MCF 10A (cell line): ENCODE measurements at regions of chr11 and their contacts with region 1.

Region 1: GRCh38 chr11:47248664-47249377 is at the start of gene ACP2:
- DNase-seq: peak; percentile 85
- H3K4me3 Mint-ChIP-seq: peak within 1 kb of the TSS; percentile 91
- H3K27ac Mint-ChIP-seq: peak within 1 kb of the TSS; percentile 98
- H3K4me1 Mint-ChIP-seq: peaks cover 4% of the 10 kb centered on the region
- H3K27me3 Mint-ChIP-seq: no peaks in the 10 kb centered on the region
- CTCF ChIP-seq: peak; percentile 9
- total RNA-seq, gene ACP2: 18.7 and 23.7 TPM in 2 replicates

Region 2: GRCh38 chr11:47087801-47088200 is 161.0 kb before region 1 on chr11:
- CTCF ChIA-PET with region 1: no interaction called
- POLR2A ChIA-PET with region 1: no interaction called
- intact Hi-C with region 1: no loop called
- DNase-seq: no peak
- H3K4me3 Mint-ChIP-seq: no peak overlapping the region
- H3K27ac Mint-ChIP-seq: no peak overlapping the region
- H3K4me1 Mint-ChIP-seq: no peaks in the 10 kb centered on the region
- H3K27me3 Mint-ChIP-seq: no peaks in the 10 kb centered on the region
- CTCF ChIP-seq: no peak

Region 3: DNA sequence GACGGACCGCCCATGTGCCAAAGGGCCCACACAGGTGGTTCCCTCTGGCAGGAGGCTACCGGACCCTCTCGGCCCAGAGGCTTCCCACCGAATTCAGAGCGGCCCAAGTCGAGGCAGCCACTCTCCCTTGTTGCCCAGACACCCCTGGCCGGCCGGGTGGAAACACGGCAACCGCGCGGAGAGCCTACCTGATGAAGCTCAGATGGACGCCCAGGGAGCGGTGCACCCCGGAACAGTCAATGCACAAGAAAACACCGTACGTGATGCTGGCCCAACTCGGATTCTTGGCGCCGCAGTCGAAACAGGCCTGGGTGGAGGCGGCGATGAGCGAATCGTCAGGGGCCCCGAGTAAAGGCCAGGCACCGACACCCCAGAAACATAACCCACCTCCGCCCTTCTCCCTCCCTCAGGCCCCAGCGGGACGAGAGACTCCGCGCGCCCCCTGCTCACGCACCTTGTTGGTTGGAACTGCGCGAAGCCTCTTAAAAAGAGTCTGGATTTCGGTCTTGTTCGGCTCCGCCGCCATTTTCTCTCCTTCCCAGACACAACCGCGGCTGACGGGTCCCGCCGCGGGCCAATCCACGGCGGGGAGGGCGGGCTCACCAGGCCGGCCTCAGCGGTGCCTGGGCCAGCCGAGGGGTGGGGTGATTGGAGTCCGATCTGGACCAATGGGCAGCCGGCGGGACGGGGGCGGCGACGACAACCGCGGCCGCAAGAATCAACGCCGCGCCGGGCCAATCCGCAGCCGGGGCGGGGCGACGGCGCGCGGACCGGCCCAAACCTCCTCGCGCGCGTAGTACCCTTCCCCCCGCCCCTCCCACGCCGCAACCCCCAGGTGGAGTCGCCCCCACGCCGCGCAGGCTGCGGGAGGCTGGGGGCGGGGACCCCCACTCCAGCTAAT is 72.2 kb before region 1 on chr11 and contains the start of gene ARFGAP2:
- CTCF ChIA-PET with region 1: interaction called, 9 read pairs
- POLR2A ChIA-PET with region 1: interaction called, 5 read pairs
- intact Hi-C with region 1: loop called (anchors 2 kb)
- DNase-seq: peak; percentile 95
- H3K4me3 Mint-ChIP-seq: peak within 1 kb of the TSS; percentile 93
- H3K27ac Mint-ChIP-seq: peak within 1 kb of the TSS; percentile 99
- H3K4me1 Mint-ChIP-seq: peaks cover 17% of the 10 kb centered on the region
- H3K27me3 Mint-ChIP-seq: no peaks in the 10 kb centered on the region
- CTCF ChIP-seq: no peak
- total RNA-seq, gene ARFGAP2: 78.0 and 81.4 TPM in 2 replicates

Region 4: GRCh38 chr11:47233989-47234668 is 14.7 kb before region 1 on chr11:
- CTCF ChIA-PET with region 1: interaction called, 7 read pairs
- POLR2A ChIA-PET with region 1: interaction called, 30 read pairs
- intact Hi-C with region 1: no loop called
- DNase-seq: peak; percentile 57
- H3K4me3 Mint-ChIP-seq: no peak overlapping the region
- H3K27ac Mint-ChIP-seq: peak overlapping the region; percentile 72
- H3K4me1 Mint-ChIP-seq: peaks cover 14% of the 10 kb centered on the region
- H3K27me3 Mint-ChIP-seq: no peaks in the 10 kb centered on the region
- CTCF ChIP-seq: no peak

Region 5: GRCh38 chr11:47259178-47259977 is 10.6 kb after region 1 on chr11:
- CTCF ChIA-PET with region 1: interaction called, 33 read pairs
- POLR2A ChIA-PET with region 1: interaction called, 38 read pairs
- intact Hi-C with region 1: no loop called
- DNase-seq: peak; percentile 47
- H3K4me3 Mint-ChIP-seq: no peak overlapping the region
- H3K27ac Mint-ChIP-seq: no peak overlapping the region
- H3K4me1 Mint-ChIP-seq: peaks cover 24% of the 10 kb centered on the region
- H3K27me3 Mint-ChIP-seq: no peaks in the 10 kb centered on the region
- CTCF ChIP-seq: peak; percentile 40

Region 6: DNA sequence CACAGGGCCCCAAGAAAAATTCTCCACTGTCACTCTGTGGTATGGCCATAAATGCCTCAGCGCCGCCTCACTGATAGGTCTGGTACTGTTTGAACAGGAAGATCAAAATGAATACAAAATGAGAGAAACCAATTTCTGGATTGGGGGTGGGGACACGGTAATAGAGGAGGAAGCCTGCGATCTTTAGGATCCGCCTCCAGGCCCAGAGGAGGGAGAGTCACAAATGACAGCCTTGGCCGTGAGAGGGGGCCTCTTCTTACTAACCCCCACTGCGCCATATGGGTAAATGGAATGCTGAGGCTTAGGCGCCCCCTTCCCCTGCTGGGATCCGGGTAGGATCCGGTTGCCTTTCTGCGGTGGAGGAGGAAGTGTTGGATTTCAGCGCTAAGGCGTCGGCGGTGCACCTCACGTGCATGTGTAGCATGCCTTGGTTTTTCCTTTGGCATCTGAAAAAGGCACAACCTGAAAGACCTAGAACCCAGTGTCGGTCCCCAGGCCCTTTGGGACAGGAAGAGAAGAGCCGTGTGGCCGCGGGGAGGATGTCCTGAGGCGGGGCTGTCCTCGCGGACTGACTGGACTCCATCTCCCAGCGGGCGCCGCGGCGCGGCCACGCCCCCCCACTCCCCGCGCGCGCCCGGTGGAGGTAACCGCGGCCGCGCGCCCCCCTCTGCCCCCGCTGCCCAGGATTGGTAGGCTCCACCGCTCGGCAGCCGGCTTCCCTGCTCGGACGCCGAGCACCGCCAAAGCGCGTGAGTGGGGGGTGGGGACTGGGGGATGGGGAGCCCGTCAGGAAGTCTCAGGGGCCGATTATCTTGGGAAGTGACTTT is 20.4 kb after region 1 on chr11:
- CTCF ChIA-PET with region 1: interaction called, 9 read pairs
- POLR2A ChIA-PET with region 1: interaction called, 10 read pairs
- intact Hi-C with region 1: no loop called
- DNase-seq: peak; percentile 84
- H3K4me3 Mint-ChIP-seq: peak overlapping the region; percentile 85
- H3K27ac Mint-ChIP-seq: peak overlapping the region; percentile 78
- H3K4me1 Mint-ChIP-seq: peaks cover 16% of the 10 kb centered on the region
- H3K27me3 Mint-ChIP-seq: no peaks in the 10 kb centered on the region
- CTCF ChIP-seq: no peak

Region 7: DNA sequence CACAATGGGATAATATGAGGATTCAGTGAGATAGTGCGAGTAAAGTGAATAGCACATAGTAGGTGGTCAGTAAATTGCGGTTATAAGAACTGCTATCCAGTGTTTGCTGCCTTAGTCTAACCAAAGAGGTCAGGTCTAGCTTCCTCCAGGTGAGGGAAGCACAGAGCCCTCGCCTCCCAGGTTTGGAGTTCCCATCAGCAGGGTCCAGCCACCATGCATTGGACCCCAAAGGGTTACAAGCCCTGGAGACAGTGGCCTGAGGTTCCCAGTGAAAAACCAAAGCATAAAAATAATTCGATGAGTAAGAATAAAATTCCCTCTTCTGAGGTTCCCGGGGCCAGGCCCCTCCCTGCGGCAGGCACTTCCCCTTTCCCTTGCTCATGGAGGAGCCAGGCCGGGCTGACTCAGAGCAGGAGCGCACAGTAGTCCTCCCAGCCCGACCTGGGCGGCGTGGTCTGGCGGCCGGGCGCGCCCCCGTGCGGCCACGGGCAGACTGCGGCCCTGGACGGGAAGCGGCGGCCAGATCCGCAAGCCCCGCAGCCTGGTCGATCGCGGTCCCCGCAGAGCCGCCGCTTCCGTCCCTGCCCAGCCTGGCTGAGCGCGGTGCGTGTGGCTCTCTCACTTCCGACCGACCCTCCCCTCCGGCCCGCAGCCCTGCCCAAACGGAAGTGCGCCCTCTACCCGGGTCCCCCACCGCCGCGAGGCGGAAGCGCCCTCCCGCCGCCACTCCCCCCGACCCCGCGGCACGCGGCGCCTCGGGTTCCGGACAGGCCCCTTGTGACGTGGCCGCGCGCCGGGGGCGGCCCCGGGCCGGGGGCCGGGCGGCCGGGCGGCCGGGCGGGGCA is 159.1 kb after region 1 on chr11 and contains the start of gene SLC39A13:
- CTCF ChIA-PET with region 1: interaction called, 3 read pairs
- POLR2A ChIA-PET with region 1: interaction called, 14 read pairs
- intact Hi-C with region 1: no loop called
- DNase-seq: peak; percentile 91
- H3K4me3 Mint-ChIP-seq: peak within 1 kb of the TSS; percentile 93
- H3K27ac Mint-ChIP-seq: peak within 1 kb of the TSS; percentile 98
- H3K4me1 Mint-ChIP-seq: peaks cover 24% of the 10 kb centered on the region
- H3K27me3 Mint-ChIP-seq: no peaks in the 10 kb centered on the region
- CTCF ChIP-seq: peak; percentile 79
- total RNA-seq, gene SLC39A13: 56.2 and 56.5 TPM in 2 replicates

Region 8: DNA sequence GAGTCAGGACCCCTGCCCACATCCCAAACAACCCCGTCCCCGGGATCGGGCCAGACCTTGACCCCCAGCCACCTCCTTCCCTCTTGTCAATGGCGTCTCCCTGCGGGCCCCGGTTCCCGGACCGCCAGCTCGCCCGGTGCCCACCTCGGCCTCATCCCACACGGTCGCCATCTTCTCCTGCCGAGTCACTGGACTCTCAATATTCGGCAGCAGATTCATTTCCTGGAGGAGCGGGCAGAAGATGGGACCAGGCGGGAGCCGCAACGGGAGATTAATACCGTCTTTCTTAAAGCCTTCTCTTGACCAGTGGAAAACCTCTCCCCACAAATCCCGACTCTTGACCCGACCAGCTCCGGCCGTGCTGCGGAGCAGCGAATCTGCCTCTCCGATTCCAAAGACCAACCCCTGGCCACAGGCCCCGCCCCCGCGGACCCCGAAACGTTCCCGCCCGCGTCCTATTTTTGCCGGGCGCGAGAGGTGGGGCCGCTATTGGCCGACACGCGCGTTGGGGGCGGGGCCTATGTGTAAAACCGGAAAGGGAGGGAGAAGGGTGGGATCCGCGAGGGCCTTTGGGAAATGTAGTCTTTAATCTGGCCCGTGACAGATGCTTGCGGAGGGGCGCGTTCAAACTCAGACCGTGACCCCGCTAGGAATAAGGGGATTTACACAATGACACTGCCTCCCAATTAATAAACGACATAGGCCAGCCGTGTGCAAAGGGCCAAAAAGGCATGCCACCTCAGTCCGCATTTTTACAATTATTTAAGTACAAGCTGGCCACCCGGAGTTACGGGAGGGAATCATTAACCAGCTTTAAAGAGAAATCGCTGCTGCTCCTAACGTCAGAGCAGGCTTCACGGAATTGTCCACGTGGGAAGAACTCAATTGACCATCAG is 177.5 kb after region 1 on chr11 and contains the start of gene PSMC3:
- CTCF ChIA-PET with region 1: no interaction called
- POLR2A ChIA-PET with region 1: interaction called, 10 read pairs
- intact Hi-C with region 1: no loop called
- DNase-seq: peak; percentile 98
- H3K4me3 Mint-ChIP-seq: peak within 1 kb of the TSS; percentile 98
- H3K27ac Mint-ChIP-seq: peak within 1 kb of the TSS; percentile 100
- H3K4me1 Mint-ChIP-seq: peaks cover 17% of the 10 kb centered on the region
- H3K27me3 Mint-ChIP-seq: no peaks in the 10 kb centered on the region
- CTCF ChIP-seq: no peak
- total RNA-seq, gene PSMC3: 162 and 194 TPM in 2 replicates